ENCODE measurements at regions of chr7 and their contacts with region 1.

Region 1: DNA sequence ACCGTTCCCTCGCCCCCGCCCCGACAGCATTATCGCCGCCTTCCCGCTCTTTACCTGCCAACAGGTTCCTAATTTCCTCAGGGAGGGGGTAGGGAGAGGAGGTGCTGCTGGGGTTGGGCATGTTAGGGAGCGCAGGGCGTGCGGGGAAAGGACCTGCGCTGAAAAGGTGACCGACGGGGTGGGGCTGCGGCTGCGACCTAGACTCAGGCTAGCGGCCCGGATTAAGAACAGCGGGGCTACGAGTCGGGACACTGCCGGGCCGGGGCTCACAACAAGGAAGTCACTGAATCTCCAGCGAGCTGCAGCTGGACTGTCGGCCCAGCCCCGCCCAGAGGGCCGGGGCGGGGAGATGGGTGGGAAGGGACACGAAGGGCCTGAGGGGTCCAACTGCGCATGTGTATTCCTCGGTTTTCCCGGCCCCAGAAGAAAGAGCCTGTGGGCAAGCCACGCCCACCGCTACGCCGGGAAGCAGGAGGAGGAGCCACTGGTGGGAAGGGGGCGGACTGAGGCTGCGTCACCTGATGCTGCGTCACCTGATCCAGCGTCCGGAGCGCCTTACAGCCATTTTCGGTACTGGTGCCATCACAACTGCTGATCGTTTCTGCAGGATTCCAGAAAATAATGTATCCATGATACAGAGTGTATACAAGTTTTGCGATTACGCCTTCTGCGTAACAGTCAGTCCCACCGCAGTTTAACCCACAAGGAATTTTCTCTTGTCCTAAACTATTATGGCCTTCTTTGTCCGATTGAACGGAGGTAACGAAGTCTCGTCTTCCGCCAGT is at the start of gene SKAP2:
- DNase-seq: peak; percentile 58 to 93 (median 79)
- ATAC-seq: peak; percentile 88
- H3K4me3 ChIP-seq: peak within 1 kb of the TSS; percentile 67 to 87
- H3K4me3 Mint-ChIP-seq: peak within 1 kb of the TSS; percentile 92
- H3K27ac ChIP-seq: peak within 1 kb of the TSS; percentile 49 to 89
- H3K27ac Mint-ChIP-seq: peak within 1 kb of the TSS; percentile 84
- H3K4me1 ChIP-seq: peaks cover 15% of the 10 kb centered on the region
- H3K4me1 Mint-ChIP-seq: peaks cover 22% of the 10 kb centered on the region
- H3K27me3 ChIP-seq: peaks cover 0 to 6% of the 10 kb centered on the region in 2 experiments
- H3K27me3 Mint-ChIP-seq: peaks cover 22% of the 10 kb centered on the region
- CTCF ChIP-seq: no peak
- total RNA-seq, gene SKAP2: 2.3 to 3.5 TPM

Region 2: DNA sequence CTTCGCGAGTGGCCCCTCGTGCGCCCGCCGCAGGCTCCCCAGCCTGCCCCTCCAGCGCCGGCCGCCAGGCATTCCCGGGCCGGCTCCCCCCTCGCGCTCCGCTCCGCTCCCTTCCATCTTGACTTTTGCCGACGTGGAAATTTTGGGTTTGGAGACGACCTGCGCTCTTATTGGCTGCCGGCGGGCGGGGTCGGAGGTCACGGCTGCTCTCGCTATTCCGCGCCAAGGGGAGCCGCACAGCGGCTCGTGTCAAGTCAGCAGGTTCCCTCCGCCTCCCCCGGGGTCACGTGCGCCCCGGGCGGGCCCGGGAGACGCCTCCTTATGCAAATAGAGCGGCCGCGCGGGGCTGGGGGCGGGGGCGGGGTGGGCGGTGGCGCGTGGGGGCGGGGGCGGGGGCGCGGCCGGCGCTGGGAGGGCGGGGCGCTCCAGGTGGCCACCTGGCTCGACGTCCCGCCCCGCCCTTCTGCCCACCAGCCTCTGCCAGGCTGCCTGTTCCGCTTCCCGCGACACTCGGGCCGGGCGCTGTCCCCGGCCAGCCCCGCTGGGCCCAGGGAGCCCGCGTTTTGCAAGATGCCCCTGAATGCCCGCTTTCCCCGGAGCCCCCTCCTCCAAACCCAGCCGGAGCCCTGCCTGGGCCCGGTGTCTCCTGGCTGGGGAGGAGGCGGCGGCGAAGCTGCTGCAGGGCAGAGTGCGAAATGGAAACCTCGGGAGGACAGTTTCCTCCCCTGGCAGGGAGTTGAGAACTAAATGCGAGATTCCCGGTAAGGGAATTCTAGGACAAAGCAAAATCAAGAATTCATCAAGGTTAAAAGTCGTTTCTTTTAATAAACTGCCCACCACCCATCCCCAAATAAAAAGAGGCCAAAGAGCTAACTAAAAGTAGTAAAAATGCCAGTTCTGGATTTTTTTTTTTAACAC is 913.2 kb before region 1 on chr7:
- CTCF ChIA-PET with region 1: no interaction called
- POLR2A ChIA-PET with region 1: no interaction called
- intact Hi-C with region 1: loop called in 1 of 2 experiments (anchors 5 kb)
- DNase-seq: peak; percentile 70 to 93 (median 87)
- ATAC-seq: peak; percentile 97
- H3K4me3 ChIP-seq: peak overlapping the region; percentile 54 to 65
- H3K4me3 Mint-ChIP-seq: peak overlapping the region; percentile 90
- H3K27ac ChIP-seq: peak overlapping the region in 1 of 2 experiments; percentile 27
- H3K27ac Mint-ChIP-seq: peak overlapping the region; percentile 76
- H3K4me1 ChIP-seq: peaks cover 18% of the 10 kb centered on the region
- H3K4me1 Mint-ChIP-seq: peaks cover 22% of the 10 kb centered on the region
- H3K27me3 ChIP-seq: no peaks in the 10 kb centered on the region
- H3K27me3 Mint-ChIP-seq: peaks cover 2% of the 10 kb centered on the region
- CTCF ChIP-seq: no peak

Region 3: DNA sequence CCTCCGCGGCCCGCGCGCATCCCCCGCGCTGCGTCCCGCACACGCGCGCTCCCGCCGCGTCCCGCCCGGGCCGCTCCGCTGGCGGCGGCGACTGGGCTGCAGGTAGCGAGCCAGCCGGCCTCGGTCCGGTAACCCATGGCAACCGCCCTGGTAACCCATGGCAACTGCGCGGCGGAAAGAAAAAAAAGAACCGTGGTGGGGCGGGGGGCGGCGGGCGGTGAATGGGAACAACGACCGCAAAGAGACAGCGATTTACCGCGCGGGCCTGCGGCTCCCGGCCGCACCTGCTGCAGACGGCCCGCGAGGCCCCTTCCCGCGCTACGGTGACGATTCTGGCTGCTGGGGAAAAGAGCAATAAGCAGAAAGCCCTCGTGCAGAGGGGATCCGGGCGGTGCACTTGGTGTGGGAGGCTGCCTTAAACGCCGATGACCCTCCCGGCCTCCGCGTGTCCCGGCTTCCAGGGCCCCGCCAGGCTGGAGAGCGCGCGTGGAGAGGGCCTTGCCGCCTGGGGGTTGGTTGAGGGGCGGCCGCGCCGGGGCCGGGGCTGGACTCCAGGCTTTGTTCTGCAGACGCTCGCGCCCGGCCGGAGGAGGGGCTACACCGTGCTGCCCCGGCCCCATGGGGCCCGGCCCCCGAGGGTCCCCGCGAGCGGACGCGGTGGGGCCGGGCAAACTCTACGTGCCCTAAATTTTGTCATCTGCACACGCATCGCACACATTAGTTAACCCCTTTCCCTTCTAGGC is 488.2 kb before region 1 on chr7:
- CTCF ChIA-PET with region 1: no interaction called
- POLR2A ChIA-PET with region 1: no interaction called
- intact Hi-C with region 1: loop called in 1 of 2 experiments (anchors 10 kb)
- DNase-seq: peak in 5 of 9 experiments; percentile 9 to 56 (median 52)
- ATAC-seq: peak; percentile 41
- H3K4me3 ChIP-seq: peak overlapping the region; percentile 57 to 75
- H3K4me3 Mint-ChIP-seq: peak overlapping the region; percentile 84
- H3K27ac ChIP-seq: no peak overlapping the region
- H3K27ac Mint-ChIP-seq: no peak overlapping the region
- H3K4me1 ChIP-seq: peaks cover 8% of the 10 kb centered on the region
- H3K4me1 Mint-ChIP-seq: peaks cover 5% of the 10 kb centered on the region
- H3K27me3 ChIP-seq: peaks cover 7 to 11% of the 10 kb centered on the region in 2 experiments
- H3K27me3 Mint-ChIP-seq: peaks cover 29% of the 10 kb centered on the region
- CTCF ChIP-seq: no peak

Region 4: GRCh38 chr7:27095897-27096767 is 231.6 kb after region 1 on chr7 and contains the start of gene HOXA1:
- CTCF ChIA-PET with region 1: no interaction called
- POLR2A ChIA-PET with region 1: no interaction called
- intact Hi-C with region 1: loop called (anchors 5 to 10 kb)
- DNase-seq: peak; percentile 44 to 90 (median 74)
- ATAC-seq: peak; percentile 91
- H3K4me3 ChIP-seq: peak within 1 kb of the TSS; percentile 76 to 80
- H3K4me3 Mint-ChIP-seq: peak within 1 kb of the TSS; percentile 90
- H3K27ac ChIP-seq: peak within 1 kb of the TSS; percentile 42 to 46
- H3K27ac Mint-ChIP-seq: peak within 1 kb of the TSS; percentile 82
- H3K4me1 ChIP-seq: peaks cover 21% of the 10 kb centered on the region
- H3K4me1 Mint-ChIP-seq: peaks cover 35% of the 10 kb centered on the region
- H3K27me3 ChIP-seq: peaks cover 0 to 15% of the 10 kb centered on the region in 2 experiments
- H3K27me3 Mint-ChIP-seq: peaks cover 42% of the 10 kb centered on the region
- CTCF ChIP-seq: no peak
- total RNA-seq, gene HOXA1: 0.79 to 0.83 TPM

Region 5: GRCh38 chr7:28179120-28180030 is 1314.9 kb after region 1 on chr7:
- CTCF ChIA-PET with region 1: no interaction called
- POLR2A ChIA-PET with region 1: no interaction called
- intact Hi-C with region 1: loop called in 1 of 2 experiments (anchors 2 kb)
- DNase-seq: peak; percentile 45 to 88 (median 74)
- ATAC-seq: peak; percentile 70
- H3K4me3 ChIP-seq: peak overlapping the region; percentile 27 to 38
- H3K4me3 Mint-ChIP-seq: peak overlapping the region; percentile 82
- H3K27ac ChIP-seq: peak overlapping the region; percentile 12 to 21
- H3K27ac Mint-ChIP-seq: peak overlapping the region; percentile 60
- H3K4me1 ChIP-seq: peaks cover 7% of the 10 kb centered on the region
- H3K4me1 Mint-ChIP-seq: peaks cover 15% of the 10 kb centered on the region
- H3K27me3 ChIP-seq: no peaks in the 10 kb centered on the region
- H3K27me3 Mint-ChIP-seq: no peaks in the 10 kb centered on the region
- CTCF ChIP-seq: no peak

Measured in CD8-positive, alpha-beta T cell (primary cell).